RWPE1 (cell line): ENCODE measurements at regions of chr20 and their contacts with region 1.

Region 1: DNA sequence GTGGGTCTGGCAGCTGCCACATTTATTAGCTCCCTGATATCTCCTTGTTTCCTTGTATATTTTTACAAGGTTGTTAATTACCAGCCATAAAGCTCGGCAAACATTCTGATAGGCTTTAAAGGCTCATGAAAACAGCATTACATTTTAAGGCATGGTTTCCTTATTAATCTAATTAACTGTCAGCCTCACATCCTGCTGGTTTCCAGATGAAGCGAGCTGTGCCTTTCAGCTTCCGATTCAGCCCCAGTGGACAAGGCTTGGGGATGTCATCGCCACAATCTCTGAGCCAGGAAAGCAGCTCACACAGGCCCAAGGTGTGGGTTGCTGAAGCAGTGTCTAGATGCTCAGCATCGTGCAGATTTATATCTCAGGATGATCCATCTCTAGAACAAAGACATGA is 66.0 kb upstream of the RALY start:
- DNase-seq: no peak
- H3K27ac ChIP-seq: no peak overlapping the region
- CTCF ChIP-seq: no peak

Region 2: GRCh38 chr20:33883164-33883563 is 44.6 kb before region 1 on chr20:
- CTCF ChIA-PET with region 1: no interaction called
- POLR2A ChIA-PET with region 1: no interaction called
- DNase-seq: no peak
- H3K27ac ChIP-seq: no peak overlapping the region
- CTCF ChIP-seq: no peak

Region 3: GRCh38 chr20:33915726-33916331 is 11.9 kb before region 1 on chr20:
- CTCF ChIA-PET with region 1: interaction called, 10 read pairs
- POLR2A ChIA-PET with region 1: no interaction called
- DNase-seq: peak; percentile 84
- H3K27ac ChIP-seq: no peak overlapping the region
- CTCF ChIP-seq: peak; percentile 60

Region 4: GRCh38 chr20:34155836-34156235 is 228.1 kb after region 1 on chr20:
- CTCF ChIA-PET with region 1: no interaction called
- POLR2A ChIA-PET with region 1: no interaction called
- DNase-seq: no peak
- H3K27ac ChIP-seq: no peak overlapping the region
- CTCF ChIP-seq: no peak